ENCODE measurements at regions of chr14 and their contacts with region 1.

Region 1: DNA sequence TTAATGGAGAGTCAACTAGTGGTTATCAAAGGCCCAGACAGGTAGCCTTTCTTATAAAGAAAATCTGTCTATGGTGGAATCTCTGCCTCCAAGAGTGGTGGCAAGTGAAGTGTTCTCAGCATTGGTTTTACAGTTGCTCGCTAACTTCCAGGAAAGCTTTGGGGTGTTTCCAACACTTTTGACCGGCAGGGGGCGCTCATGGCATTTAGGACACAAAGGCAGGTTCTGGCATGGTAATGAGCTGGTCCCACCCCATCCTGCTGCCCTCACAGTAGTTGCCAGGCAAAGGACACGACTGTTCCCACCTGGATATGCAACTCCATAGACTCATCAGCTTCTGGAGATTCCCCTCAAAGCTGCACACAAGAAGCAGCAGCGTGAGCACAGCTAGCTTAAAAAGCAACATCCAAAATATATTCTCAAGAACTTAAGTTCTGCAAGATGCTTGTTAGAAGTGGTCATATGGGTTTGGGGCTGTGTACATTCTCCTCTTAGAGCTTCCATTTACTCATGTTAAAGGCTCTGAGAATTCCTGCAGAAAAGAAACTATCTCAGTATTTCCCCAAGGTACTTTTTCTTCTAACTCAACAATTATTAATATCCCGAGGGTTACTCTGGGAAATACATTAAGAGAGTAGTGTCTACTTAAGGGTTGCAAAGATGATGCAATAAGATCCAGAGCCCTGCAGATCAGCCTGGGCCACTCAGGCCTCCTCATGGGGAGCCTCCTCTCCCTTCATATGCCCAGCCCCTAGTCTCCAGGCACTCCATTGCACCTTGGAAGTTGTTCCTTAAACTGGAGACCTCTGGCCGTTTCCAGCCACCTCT is 14.8 kb downstream of the PROX2 start:
- DNase-seq: peak; percentile 94 to 95
- H3K4me3 ChIP-seq: no peak overlapping the region
- H3K27ac ChIP-seq: no peak overlapping the region
- H3K4me1 ChIP-seq: peaks cover 0 to 12% (median 7%) of the 10 kb centered on the region in 4 donors
- H3K27me3 ChIP-seq: peaks cover 0 to 7% (median 0%) of the 10 kb centered on the region in 3 donors
- CTCF ChIP-seq: peak in 6 of 7 experiments; percentile 48 to 90 (median 77)
- EP300 ChIP-seq: no peak
- POLR2A ChIP-seq: no peak

Region 2: DNA sequence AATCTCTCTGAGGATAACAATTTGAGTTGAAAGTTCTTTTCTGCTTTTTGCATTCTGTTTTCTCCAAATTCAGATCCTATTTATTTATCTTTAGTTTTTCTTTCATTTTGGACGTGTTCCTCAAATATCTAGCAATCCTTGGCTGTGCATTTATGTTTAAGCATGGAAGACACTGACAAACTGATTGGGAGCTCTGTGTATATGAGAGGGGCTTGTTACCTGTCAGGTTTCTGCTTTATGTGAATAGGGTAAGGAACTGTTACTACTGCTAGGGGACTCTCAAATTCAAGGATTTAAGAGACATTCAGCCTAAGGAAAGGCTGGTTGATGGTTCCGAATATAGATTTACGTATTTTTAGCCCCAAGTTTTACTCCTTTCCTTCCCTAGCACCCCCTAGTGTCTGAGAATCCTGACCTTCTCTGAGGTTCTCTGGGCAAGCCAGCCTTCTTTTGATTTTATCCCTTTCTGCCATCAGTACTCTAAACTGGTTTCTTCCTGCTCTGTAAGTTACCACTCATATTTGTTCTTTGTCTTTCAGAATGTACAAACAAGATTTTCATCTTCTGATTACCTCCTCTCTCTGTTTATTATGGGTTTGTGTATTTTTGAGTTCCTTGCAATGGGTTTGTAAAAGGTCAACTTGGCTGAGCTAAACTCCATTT is 67.5 kb before region 1 on chr14:
- intact Hi-C with region 1: no loop called
- DNase-seq: peak in 1 of 2 donors; percentile 23
- H3K4me3 ChIP-seq: no peak overlapping the region
- H3K27ac ChIP-seq: no peak overlapping the region
- H3K4me1 ChIP-seq: peaks cover 0 to 29% (median 12%) of the 10 kb centered on the region in 4 donors
- H3K27me3 ChIP-seq: no peaks in the 10 kb centered on the region
- CTCF ChIP-seq: no peak
- EP300 ChIP-seq: no peak
- POLR2A ChIP-seq: no peak

Region 3: DNA sequence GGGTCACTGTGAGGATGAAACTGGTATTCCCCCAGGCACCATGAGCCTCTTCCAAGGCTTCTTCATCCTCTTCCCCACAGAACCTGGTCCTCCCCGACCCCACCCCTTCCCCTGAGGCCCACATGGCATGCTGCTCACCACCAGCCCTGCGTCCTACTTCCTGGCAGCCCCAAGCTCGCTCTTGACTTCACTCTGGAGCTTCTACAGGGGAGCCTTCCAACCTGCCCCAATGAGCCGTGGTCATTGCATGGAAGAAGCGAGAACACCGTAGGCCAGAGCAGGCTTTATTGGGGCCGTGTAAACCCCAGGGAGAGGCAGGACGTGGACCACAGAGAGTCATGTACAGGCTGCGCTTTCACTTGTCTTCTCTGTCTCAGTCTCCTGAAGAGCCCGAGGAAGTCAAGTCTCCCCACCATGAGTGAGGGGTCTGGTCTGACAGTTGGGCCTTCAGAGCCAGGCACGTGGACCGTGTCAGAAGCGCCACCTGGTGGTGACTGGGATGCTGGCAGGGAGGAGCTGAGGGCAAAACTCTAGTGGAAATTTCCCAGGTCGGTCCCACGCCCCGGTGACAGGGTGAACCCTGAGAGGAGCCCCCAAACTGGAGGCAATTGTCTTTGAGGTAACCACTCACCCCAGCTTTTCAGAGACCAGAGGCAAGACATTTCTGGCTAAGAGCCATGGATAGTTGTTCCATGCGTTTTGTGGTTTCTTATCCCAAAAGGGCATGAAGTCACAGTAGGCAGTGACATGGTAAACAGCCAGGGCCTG is 44.4 kb after region 1 on chr14:
- intact Hi-C with region 1: loop called (anchors 5 kb)
- DNase-seq: peak; percentile 77 to 82
- H3K4me3 ChIP-seq: no peak overlapping the region
- H3K27ac ChIP-seq: peak overlapping the region in 2 of 5 donors; percentile 14 to 37
- H3K4me1 ChIP-seq: peaks cover 4 to 30% (median 21%) of the 10 kb centered on the region in 4 donors
- H3K27me3 ChIP-seq: no peaks in the 10 kb centered on the region
- CTCF ChIP-seq: peak in 6 of 7 experiments; percentile 18 to 97 (median 92)
- EP300 ChIP-seq: no peak
- POLR2A ChIP-seq: no peak

Region 4: GRCh38 chr14:75689012-75689411 is 827.9 kb after region 1 on chr14:
- intact Hi-C with region 1: no loop called
- DNase-seq: peak in 1 of 2 donors; percentile 49
- H3K4me3 ChIP-seq: no peak overlapping the region
- H3K27ac ChIP-seq: no peak overlapping the region
- H3K4me1 ChIP-seq: peaks cover 0 to 6% (median 0%) of the 10 kb centered on the region in 4 donors
- H3K27me3 ChIP-seq: no peaks in the 10 kb centered on the region
- CTCF ChIP-seq: no peak
- EP300 ChIP-seq: no peak
- POLR2A ChIP-seq: no peak

Measured in stomach (tissue), 19 donors.